AG04449 (cell line): ENCODE measurements at regions of chr19 and their contacts with region 1.

Region 1: GRCh38 chr19:46076951-46077816 is 36.4 kb upstream of the IGFL4 start:
- DNase-seq: peak; percentile 9
- H3K4me3 ChIP-seq: peak overlapping the region; percentile 26; the same call in 1 of the 2 replicates
- CTCF ChIP-seq: peak; percentile 91

Region 2: GRCh38 chr19:45939792-45940514 is 137.2 kb before region 1 on chr19:
- CTCF ChIA-PET with region 1: no interaction called
- POLR2A ChIA-PET with region 1: no interaction called
- DNase-seq: no peak
- H3K4me3 ChIP-seq: no peak overlapping the region
- CTCF ChIP-seq: no peak

Region 3: DNA sequence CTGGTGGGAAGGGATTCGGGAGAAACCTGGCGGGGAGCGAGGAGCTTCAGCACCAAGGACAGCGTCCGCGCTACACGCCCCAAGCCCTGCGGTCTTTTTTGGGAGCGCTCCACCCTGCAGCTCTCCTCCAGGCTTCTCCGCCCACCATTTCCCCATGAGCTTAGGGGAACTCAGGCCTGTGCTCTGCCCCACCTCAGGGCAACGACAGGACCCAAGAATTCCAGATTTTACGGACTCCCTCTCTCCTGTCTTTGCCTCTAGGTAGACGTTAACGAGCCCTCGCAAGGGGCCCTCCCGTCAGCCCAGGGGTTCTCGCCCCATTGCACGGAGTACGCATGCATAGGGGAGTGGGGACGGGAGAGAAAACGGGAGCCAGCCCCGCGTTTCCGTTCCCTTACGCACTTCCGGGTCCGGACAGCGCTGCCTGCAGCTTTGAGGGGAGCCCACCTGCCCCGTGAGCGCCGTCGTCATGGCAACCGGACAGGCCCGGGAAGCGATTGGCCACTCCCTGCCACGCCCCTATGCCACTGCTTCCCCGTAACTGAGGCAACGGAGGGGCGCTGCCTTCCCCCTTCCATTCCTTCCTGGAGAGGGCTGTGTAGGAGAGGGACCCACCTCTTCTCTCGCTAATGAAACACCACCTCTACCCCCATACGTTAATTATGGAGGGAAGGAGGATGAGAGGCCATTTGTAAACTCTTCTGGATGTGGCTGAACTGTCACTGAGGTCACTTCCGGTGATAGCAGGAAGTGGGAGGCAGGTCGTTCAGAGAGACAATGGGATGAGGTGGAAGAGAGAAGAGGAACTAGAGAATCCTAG is 124.3 kb before region 1 on chr19:
- CTCF ChIA-PET with region 1: no interaction called
- POLR2A ChIA-PET with region 1: no interaction called
- DNase-seq: no peak
- H3K4me3 ChIP-seq: peak overlapping the region; percentile 6
- CTCF ChIP-seq: no peak

Region 4: GRCh38 chr19:46016426-46017094 is 60.6 kb before region 1 on chr19:
- CTCF ChIA-PET with region 1: interaction called, 523 read pairs
- POLR2A ChIA-PET with region 1: no interaction called
- DNase-seq: no peak
- H3K4me3 ChIP-seq: peak overlapping the region; percentile 62
- CTCF ChIP-seq: peak; percentile 89

Region 5: GRCh38 chr19:46030812-46031550 is 46.2 kb before region 1 on chr19:
- CTCF ChIA-PET with region 1: interaction called, 523 read pairs
- POLR2A ChIA-PET with region 1: interaction called, 3 read pairs
- DNase-seq: no peak
- H3K4me3 ChIP-seq: no peak overlapping the region
- CTCF ChIP-seq: no peak

Region 6: GRCh38 chr19:46049597-46049996 is 27.6 kb before region 1 on chr19:
- CTCF ChIA-PET with region 1: interaction called, 11 read pairs
- POLR2A ChIA-PET with region 1: no interaction called
- DNase-seq: no peak
- H3K4me3 ChIP-seq: no peak overlapping the region
- CTCF ChIP-seq: no peak

Region 7: GRCh38 chr19:46090444-46090843 is 13.3 kb after region 1 on chr19:
- CTCF ChIA-PET with region 1: interaction called, 15 read pairs
- POLR2A ChIA-PET with region 1: no interaction called
- DNase-seq: no peak
- H3K4me3 ChIP-seq: no peak overlapping the region
- CTCF ChIP-seq: no peak

Region 8: GRCh38 chr19:46191972-46192371 is 114.8 kb after region 1 on chr19:
- CTCF ChIA-PET with region 1: interaction called, 44 read pairs
- POLR2A ChIA-PET with region 1: no interaction called
- DNase-seq: no peak
- H3K4me3 ChIP-seq: no peak overlapping the region
- CTCF ChIP-seq: no peak